Activated CD4-positive, alpha-beta memory T cell treated with anti-CD3 and anti-CD28 coated beads, Interleukin-2, amount 10 ng/mL, durations not matched to agents 7 days and 5 days (primary cell): ENCODE measurements at regions of chrX and their contacts with region 1.

Region 1: GRCh38 chrX:130024127-130024526 is 41.7 kb downstream of the BCORL1 start:
- DNase-seq: peak; percentile 88
- H3K4me3 Mint-ChIP-seq: peak overlapping the region; percentile 57
- H3K27ac Mint-ChIP-seq: peak overlapping the region; percentile 73
- H3K4me1 Mint-ChIP-seq: peaks cover 14% of the 10 kb centered on the region
- H3K27me3 Mint-ChIP-seq: no peaks in the 10 kb centered on the region

Region 2: DNA sequence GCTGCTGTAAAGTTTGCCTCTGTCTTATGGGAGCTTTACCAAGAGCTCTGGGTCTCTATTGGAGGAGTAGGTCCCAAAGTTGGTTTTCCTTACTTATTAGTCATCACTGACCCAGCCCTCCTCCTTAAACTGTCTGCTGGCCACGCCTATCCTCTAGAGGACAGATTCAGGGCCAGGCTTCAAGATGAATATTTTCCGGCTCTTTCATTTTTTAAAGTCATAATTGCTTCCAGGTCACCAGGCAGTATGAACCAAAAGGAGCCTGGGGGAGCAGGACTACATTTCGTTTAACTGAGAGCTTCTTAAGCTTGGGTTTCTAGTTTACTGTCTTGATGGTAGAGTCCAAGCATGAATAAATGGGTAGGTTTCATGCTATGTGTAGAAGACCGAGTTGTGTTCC is 28.0 kb before region 1 on chrX:
- CTCF ChIA-PET with region 1: no interaction called
- POLR2A ChIA-PET with region 1: no interaction called
- DNase-seq: no peak
- H3K4me3 Mint-ChIP-seq: no peak overlapping the region
- H3K27ac Mint-ChIP-seq: no peak overlapping the region
- H3K4me1 Mint-ChIP-seq: no peaks in the 10 kb centered on the region
- H3K27me3 Mint-ChIP-seq: no peaks in the 10 kb centered on the region

Region 3: GRCh38 chrX:130039847-130040246 is 15.7 kb after region 1 on chrX:
- CTCF ChIA-PET with region 1: interaction called, 10 read pairs
- POLR2A ChIA-PET with region 1: no interaction called
- DNase-seq: no peak
- H3K4me3 Mint-ChIP-seq: no peak overlapping the region
- H3K27ac Mint-ChIP-seq: no peak overlapping the region
- H3K4me1 Mint-ChIP-seq: no peaks in the 10 kb centered on the region
- H3K27me3 Mint-ChIP-seq: no peaks in the 10 kb centered on the region